ENCODE measurements at regions of chr22 and their contacts with region 1.

Region 1: GRCh38 chr22:28043266-28043665 is 124.2 kb upstream of the PITPNB start:
- DNase-seq: no peak
- ATAC-seq: no peak
- H3K4me3 ChIP-seq: no peak overlapping the region
- H3K27ac ChIP-seq: no peak overlapping the region
- H3K4me1 ChIP-seq: no peaks in the 10 kb centered on the region
- H3K27me3 ChIP-seq: no peaks in the 10 kb centered on the region
- CTCF ChIP-seq: no peak

Region 2: GRCh38 chr22:28142361-28142961 is 99.2 kb after region 1 on chr22:
- intact Hi-C with region 1: no loop called
- DNase-seq: no peak
- ATAC-seq: peak; percentile 21 to 75 (median 57)
- H3K4me3 ChIP-seq: no peak overlapping the region
- H3K27ac ChIP-seq: no peak overlapping the region
- H3K4me1 ChIP-seq: peaks cover 19% of the 10 kb centered on the region
- H3K27me3 ChIP-seq: no peaks in the 10 kb centered on the region
- CTCF ChIP-seq: no peak

Region 3: GRCh38 chr22:28283068-28283654 is 239.9 kb after region 1 on chr22:
- intact Hi-C with region 1: no loop called
- DNase-seq: no peak
- ATAC-seq: no peak
- H3K4me3 ChIP-seq: no peak overlapping the region
- H3K27ac ChIP-seq: no peak overlapping the region
- H3K4me1 ChIP-seq: no peaks in the 10 kb centered on the region
- H3K27me3 ChIP-seq: no peaks in the 10 kb centered on the region
- CTCF ChIP-seq: no peak

Region 4: GRCh38 chr22:28817919-28818909 is 774.9 kb after region 1 on chr22:
- intact Hi-C with region 1: loop called in 1 of 2 experiments (anchors 10 kb)
- DNase-seq: no peak
- ATAC-seq: peak; percentile 53 to 81 (median 74)
- H3K4me3 ChIP-seq: peak overlapping the region; percentile 6
- H3K27ac ChIP-seq: peak overlapping the region; percentile 79
- H3K4me1 ChIP-seq: peaks cover 21% of the 10 kb centered on the region
- H3K27me3 ChIP-seq: no peaks in the 10 kb centered on the region
- CTCF ChIP-seq: no peak

Measured in psoas muscle (tissue), 8 donors.